A549 (cell line): ENCODE measurements at regions of chr17 and their contacts with region 1.

Region 1: DNA sequence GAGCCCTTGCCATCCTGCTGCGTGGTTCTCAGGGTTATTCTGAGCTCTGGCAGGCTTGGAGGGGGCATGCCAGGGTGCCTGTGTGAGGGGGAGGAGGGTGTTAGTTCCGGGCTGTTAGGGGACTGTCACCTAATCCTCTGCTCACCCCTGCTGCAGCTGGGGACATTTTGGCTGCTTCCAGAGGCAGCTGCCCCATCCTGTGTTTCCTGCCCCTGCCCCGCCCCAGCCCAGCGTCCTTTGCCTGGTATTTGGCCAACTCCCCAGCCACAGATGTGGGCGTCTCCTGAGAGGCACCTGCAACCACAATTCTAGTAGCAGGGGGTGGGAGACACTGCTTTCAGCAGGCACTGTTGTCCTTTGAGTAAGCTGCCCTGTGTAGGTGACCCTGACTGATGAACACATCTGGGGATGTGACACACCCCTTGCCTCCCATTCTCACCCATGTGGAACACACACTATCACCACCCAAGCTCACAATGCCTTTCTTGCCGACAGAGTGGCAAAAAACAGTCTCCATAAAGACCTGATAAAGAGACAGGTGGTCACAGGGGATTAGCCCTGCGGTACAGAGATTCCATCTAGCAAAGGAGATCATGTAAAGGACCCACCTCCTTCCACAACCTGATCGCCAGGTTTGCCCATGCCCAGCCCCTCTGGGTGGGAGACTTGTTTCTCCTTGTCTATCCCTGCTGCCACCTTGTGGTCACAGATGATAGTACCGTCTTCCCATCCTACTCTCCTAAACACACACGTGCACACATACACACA is at the start of gene CHRNE:
- DNase-seq: peak; percentile 58 to 89
- ATAC-seq: peak; percentile 74 to 85
- H3K4me3 ChIP-seq: no peak within 1 kb of the TSS
- H3K27ac ChIP-seq: no peak within 1 kb of the TSS
- H3K4me1 ChIP-seq: 0 out of 3 replicates have a peak, but pooled peaks cover 5% of the 10 kb centered on the region
- CTCF ChIP-seq: peak; percentile 90
- EP300 ChIP-seq: no peak
- POLR2A ChIP-seq: no peak
- RAD21 ChIP-seq: peak; percentile 62 to 73
- polyA plus RNA-seq, gene CHRNE: 0.07 and 0.10 TPM in 2 replicates

Region 2: DNA sequence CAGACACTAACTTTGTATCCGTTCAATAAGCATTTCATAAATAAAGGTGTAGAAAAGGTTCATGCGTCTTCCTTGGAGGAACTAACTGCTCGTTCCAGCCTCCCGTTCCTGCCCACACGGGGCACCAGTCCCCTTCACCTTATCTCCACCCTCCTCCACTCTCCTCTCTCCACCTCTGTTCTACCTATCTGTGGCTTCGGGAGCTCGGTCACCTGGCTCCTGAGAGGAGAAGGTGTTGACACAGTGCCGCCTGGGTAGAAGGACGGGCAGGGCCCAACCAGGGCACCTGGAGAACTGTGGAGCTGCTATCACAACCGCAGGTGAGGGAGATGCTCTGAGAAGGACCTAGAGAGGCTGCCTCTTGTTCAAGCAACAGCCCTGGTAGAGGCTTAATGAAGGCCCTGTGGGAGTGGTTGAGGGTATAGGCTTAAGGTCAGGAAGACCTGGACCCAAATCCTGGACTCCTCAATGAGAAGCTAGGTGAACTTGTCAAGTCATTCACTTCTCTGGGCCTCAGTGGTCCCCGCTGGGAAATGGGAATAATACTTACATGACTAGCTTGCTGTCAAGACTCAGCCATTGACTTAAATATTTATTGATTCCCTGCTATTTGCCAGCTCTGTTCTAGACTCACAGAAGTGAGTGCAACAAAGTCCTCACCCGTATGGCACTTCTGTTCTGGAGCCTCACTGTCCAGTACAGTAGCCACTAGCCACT is 79.7 kb before region 1 on chr17:
- CTCF ChIA-PET with region 1: no interaction called
- POLR2A ChIA-PET with region 1: no interaction called
- DNase-seq: no peak
- ATAC-seq: peak; percentile 18 to 49; a peak in 3 of 6 replicates
- H3K4me3 ChIP-seq: no peak overlapping the region
- H3K27ac ChIP-seq: no peak overlapping the region
- H3K4me1 ChIP-seq: no peaks in the 10 kb centered on the region
- CTCF ChIP-seq: no peak
- EP300 ChIP-seq: no peak
- POLR2A ChIP-seq: no peak
- RAD21 ChIP-seq: no peak

Region 3: DNA sequence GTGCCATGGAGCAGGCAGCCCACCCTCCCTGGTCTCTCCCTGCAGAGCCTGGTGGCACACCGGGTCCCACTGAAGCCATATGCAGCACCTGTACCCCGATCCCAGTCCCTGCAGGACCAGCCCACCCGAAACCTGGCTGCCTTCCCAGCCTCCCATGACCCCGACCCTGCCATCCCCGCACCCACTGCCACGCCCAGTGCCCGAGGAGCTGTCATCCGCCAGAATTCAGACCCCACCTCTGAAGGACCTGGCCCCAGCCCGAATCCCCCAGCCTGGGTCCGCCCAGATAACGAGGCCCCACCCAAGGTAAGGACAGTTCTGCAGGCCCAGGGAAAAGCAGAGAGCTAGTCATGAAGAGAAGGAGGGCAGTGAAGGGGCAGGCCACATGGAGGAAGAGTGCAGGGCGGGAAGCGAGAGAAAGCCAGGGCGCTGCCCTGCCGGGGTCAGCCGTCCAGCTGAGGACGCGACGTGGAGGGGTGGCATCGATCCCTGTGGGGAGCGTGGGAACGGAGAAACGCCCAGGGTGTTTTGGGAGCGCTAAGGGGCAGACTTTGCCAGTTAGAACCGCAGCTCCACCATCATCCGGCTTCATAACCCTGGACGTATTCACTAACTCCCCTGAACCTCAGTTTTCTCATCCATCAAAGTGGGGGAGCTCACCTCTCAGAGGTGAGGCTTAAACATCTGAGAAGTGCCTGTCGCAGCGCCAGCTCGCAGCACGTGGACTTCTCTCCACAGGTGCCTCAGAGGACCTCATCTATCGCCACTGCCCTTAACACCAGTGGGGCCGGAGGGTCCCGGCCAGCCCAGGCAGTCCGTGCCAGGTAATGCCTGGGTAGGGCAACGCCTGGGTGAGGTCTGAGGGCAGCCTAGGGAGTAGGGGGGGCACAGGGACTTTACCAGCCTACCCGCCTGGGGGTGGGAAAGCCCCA is 11.6 kb before region 1 on chr17:
- CTCF ChIA-PET with region 1: interaction called, 83 read pairs
- POLR2A ChIA-PET with region 1: no interaction called
- DNase-seq: no peak
- ATAC-seq: no peak
- H3K4me3 ChIP-seq: no peak overlapping the region
- H3K27ac ChIP-seq: no peak overlapping the region
- H3K4me1 ChIP-seq: no peaks in the 10 kb centered on the region
- CTCF ChIP-seq: no peak
- EP300 ChIP-seq: no peak
- POLR2A ChIP-seq: no peak
- RAD21 ChIP-seq: no peak

Region 4: GRCh38 chr17:4913994-4914393 is 10.8 kb after region 1 on chr17:
- CTCF ChIA-PET with region 1: interaction called, 24 read pairs
- POLR2A ChIA-PET with region 1: no interaction called
- DNase-seq: no peak
- ATAC-seq: no peak
- H3K4me3 ChIP-seq: no peak overlapping the region
- H3K27ac ChIP-seq: no peak overlapping the region
- H3K4me1 ChIP-seq: peaks cover 9% of the 10 kb centered on the region; the same call in 2 of the 3 replicates
- CTCF ChIP-seq: no peak
- EP300 ChIP-seq: no peak
- POLR2A ChIP-seq: no peak
- RAD21 ChIP-seq: no peak

Region 5: DNA sequence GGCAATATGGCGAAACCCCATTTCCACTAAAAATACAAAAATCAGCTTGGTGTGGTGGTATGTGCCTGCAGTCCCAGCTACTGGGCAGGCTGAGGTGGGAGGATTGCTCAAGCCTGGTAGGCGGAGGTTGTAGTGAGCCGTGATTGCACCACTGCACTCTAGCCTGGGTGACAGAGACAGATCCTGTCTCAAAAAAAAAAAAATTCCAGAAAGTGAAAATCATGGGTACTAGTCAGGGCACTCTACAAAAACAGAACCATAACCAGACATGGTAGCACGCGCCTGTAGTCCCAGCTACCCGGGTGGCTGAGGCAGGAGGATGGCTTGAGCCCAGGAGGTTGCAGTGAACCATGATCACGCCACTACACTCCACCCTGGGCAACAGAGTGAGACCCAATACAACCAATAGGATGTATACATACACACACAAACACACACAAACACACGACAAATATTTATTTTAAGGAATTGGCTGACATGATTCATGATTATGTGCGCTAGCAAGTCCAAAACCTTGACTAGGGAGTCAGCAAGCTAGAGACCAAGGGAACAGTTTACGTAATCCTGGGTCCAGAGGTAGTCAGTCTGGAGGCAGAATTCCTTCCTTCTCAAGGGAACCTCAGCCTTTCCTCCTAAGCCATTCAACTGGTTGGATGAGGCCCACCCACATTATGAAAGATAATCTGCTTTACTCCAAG is 17.3 kb after region 1 on chr17:
- CTCF ChIA-PET with region 1: interaction called, 21 read pairs
- POLR2A ChIA-PET with region 1: no interaction called
- DNase-seq: no peak
- ATAC-seq: peak; percentile 40 to 54; a peak in 4 of 6 replicates
- H3K4me3 ChIP-seq: no peak overlapping the region
- H3K27ac ChIP-seq: no peak overlapping the region
- H3K4me1 ChIP-seq: 0 out of 3 replicates have a peak, but pooled peaks cover 4% of the 10 kb centered on the region
- CTCF ChIP-seq: no peak
- EP300 ChIP-seq: no peak
- POLR2A ChIP-seq: no peak
- RAD21 ChIP-seq: no peak

Region 6: DNA sequence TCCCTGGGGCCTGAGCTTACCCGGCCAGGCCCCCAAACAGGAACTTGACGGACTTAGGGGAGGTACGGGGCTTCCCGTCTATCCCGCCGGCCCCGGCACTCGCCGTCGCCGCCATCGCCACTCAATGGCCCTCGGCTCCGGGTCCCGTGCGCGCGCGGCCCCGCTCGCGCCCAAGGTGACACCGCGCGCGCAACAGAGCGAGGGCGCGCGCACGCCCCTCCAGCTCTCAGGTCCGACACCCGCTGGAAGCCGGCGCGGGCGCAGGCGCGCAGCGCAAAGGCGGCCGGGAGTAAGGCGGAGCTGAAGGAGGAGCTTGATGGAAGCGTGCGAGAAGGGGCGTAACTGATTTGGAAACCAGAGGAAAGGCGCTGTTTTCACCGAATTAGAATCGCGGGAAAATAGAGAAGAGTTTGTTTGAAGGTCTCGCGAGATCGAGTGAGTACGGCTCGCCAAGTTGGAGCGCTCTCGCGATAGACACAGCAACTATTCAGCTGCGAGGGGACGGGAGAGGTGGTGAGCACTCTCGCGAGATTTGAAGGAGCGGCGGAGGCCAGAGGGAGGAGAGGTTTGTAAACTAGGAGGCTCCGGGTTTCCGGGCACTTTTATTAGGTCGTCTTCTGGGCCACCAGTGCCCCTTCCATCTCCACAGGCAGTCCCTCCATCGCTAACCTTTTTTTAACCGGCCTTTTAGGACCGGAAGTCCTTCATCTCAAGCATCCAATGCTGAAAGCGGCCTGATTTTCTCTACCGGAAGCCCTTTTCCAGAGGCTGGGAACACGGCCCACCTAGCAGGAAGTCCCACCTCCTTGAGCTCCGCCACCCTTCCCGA is 36.8 kb after region 1 on chr17 and contains the starts of genes RNF167 and SLC25A11:
- CTCF ChIA-PET with region 1: interaction called, 16 read pairs
- POLR2A ChIA-PET with region 1: interaction called, 3 read pairs
- DNase-seq: peak; percentile 99 to 100
- ATAC-seq: peak; percentile 80 to 81
- H3K4me3 ChIP-seq: peak within 1 kb of the TSS; percentile 85
- H3K27ac ChIP-seq: peak within 1 kb of the TSS; percentile 89 to 93
- H3K4me1 ChIP-seq: peaks cover 49% of the 10 kb centered on the region
- CTCF ChIP-seq: no peak
- EP300 ChIP-seq: no peak
- POLR2A ChIP-seq: peak; percentile 91
- RAD21 ChIP-seq: 0 out of 5 replicates have a peak, but pooled peaks of 1 of the 2 experiments have one; percentile 5
- polyA plus RNA-seq, gene RNF167: 98.7 and 110 TPM in 2 replicates
- polyA plus RNA-seq, gene SLC25A11: 60.2 and 64.4 TPM in 2 replicates

Region 7: DNA sequence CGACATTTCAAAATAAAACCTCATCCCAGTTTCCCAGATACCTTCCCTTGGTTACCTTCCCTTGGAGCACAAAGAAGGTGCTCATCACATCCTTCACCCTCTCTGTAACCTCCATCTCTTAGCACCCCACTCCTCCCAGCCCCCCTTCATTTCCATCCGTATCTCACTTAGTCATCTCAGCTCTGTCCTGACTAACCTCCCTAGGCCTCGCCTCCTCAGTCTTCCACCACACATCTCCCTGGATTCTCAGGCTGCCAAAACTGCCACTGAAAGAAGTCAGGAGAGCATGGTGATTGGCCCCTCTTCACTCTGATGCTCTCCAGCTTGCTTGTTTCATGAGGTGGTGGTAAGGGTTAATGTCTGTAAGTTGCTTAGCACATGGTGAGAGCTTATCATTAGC is 177.4 kb after region 1 on chr17:
- CTCF ChIA-PET with region 1: no interaction called
- POLR2A ChIA-PET with region 1: no interaction called
- DNase-seq: no peak
- ATAC-seq: no peak
- H3K4me3 ChIP-seq: no peak overlapping the region
- H3K27ac ChIP-seq: no peak overlapping the region
- H3K4me1 ChIP-seq: no peaks in the 10 kb centered on the region
- CTCF ChIP-seq: no peak
- EP300 ChIP-seq: no peak
- POLR2A ChIP-seq: no peak
- RAD21 ChIP-seq: no peak